Activated T-helper 1 cell treated with anti-CD3 and anti-CD28 coated beads, Interleukin-12 subunit alpha, Interleukin-12 subunit beta, Interleukin-2, Interleukin-4 antibody, amounts not matched to agents 30 ng/mL and 10 ng/mL and 1 ng/mL, durations not matched to agents 14 hours and 24 hours and 36 hours (primary cell): ENCODE measurements at regions of chr5 and their contacts with region 1.

Region 1: GRCh38 chr5:160418561-160419457 is at the start of gene SLU7:
- DNase-seq: peak; percentile 91
- H3K4me3 Mint-ChIP-seq: peak within 1 kb of the TSS; percentile 94
- H3K27ac Mint-ChIP-seq: peak within 1 kb of the TSS; percentile 95
- H3K4me1 Mint-ChIP-seq: peaks cover 77% of the 10 kb centered on the region
- H3K27me3 Mint-ChIP-seq: no peaks in the 10 kb centered on the region
- total RNA-seq, gene SLU7: 37.4 and 47.4 TPM in 2 replicates

Region 2: GRCh38 chr5:159786901-159787691 is 631.7 kb before region 1 on chr5:
- intact Hi-C with region 1: no loop called
- DNase-seq: no peak
- H3K4me3 Mint-ChIP-seq: no peak overlapping the region
- H3K27ac Mint-ChIP-seq: no peak overlapping the region
- H3K4me1 Mint-ChIP-seq: peaks cover 9% of the 10 kb centered on the region
- H3K27me3 Mint-ChIP-seq: peaks cover 21% of the 10 kb centered on the region

Region 3: GRCh38 chr5:160119142-160119904 is 299.5 kb before region 1 on chr5 and contains the start of gene PWWP2A:
- intact Hi-C with region 1: loop called (anchors 1 kb)
- DNase-seq: peak; percentile 96
- H3K4me3 Mint-ChIP-seq: peak within 1 kb of the TSS; percentile 95
- H3K27ac Mint-ChIP-seq: peak within 1 kb of the TSS; percentile 96
- H3K4me1 Mint-ChIP-seq: peaks cover 15% of the 10 kb centered on the region
- H3K27me3 Mint-ChIP-seq: peaks cover 4% of the 10 kb centered on the region
- total RNA-seq, gene PWWP2A: 29.7 and 30.2 TPM in 2 replicates

Region 4: GRCh38 chr5:160399402-160400353 is 19.1 kb before region 1 on chr5 and contains the start of gene FAM200C:
- intact Hi-C with region 1: loop called (anchors 1 kb)
- DNase-seq: peak; percentile 74
- H3K4me3 Mint-ChIP-seq: peak within 1 kb of the TSS; percentile 87
- H3K27ac Mint-ChIP-seq: peak within 1 kb of the TSS; percentile 84
- H3K4me1 Mint-ChIP-seq: peaks cover 18% of the 10 kb centered on the region
- H3K27me3 Mint-ChIP-seq: no peaks in the 10 kb centered on the region
- total RNA-seq, gene FAM200C: 0.65 and 0.98 TPM in 2 replicates

Region 5: DNA sequence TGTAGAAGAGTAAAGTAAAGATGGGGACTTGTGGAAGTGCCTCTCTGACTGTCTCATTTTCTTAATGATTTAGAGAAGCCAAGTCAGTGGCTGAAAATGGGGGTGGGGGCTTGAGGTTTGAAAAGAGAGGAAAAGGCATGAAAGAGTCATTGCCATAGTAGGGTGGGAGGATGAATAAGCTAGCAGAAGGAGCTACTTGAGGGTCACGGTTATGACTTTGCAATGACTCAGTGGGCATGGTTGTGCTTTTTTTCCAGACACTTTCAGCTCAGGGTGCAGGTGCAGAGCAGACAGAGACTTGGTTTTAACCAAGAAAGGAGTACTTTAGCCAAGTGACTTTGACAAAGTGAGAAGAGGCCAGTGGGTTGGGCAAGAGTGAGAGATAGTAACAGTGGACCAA is 120.6 kb after region 1 on chr5:
- intact Hi-C with region 1: loop called (anchors 1 kb)
- DNase-seq: no peak
- H3K4me3 Mint-ChIP-seq: no peak overlapping the region
- H3K27ac Mint-ChIP-seq: no peak overlapping the region
- H3K4me1 Mint-ChIP-seq: peaks cover 19% of the 10 kb centered on the region
- H3K27me3 Mint-ChIP-seq: no peaks in the 10 kb centered on the region